GM12878 (cell line): ENCODE measurements at regions of chr18 and their contacts with region 1.

Region 1: GRCh38 chr18:36488131-36488530 is 190.6 kb downstream of the FHOD3 start:
- DNase-seq: no peak
- ATAC-seq: no peak
- H3K4me3 ChIP-seq: no peak overlapping the region
- H3K27ac ChIP-seq: no peak overlapping the region
- H3K4me1 ChIP-seq: no peaks in the 10 kb centered on the region
- H3K27me3 ChIP-seq: no peaks in the 10 kb centered on the region
- CTCF ChIP-seq: no peak
- EP300 ChIP-seq: no peak
- POLR2A ChIP-seq: no peak
- RAD21 ChIP-seq: no peak

Region 2: DNA sequence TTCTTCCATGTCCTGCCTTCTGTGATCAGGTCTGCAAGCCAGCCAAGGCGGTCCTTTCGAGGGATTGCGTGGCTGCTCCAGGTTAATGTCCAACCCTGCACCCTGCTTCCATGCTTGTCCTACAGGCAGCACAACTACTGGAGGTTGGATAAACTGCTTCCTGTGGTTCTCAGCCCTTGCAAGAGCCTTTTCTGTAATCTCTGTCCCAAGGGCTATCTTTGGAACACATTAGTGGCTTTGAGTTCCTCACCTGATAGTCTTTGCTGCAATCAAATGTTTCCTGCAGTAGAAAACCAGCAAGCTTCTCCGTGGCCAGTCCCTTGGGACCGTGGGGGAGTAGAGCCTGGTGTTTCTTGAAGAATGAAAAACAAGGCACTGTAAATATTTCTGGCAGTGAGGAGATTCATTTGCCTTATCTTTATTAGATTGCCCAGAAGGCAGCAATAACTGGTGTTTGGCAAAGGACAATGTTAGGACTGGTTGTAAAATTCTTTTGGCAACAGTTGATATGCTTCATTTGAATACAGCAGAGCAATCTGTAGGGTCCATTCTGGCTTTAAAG is 23.7 kb after region 1 on chr18:
- CTCF ChIA-PET with region 1: interaction called, 3 read pairs
- POLR2A ChIA-PET with region 1: interaction called, 5 read pairs
- RAD21 ChIA-PET with region 1: interaction called, 4 read pairs
- SMC1A ChIA-PET with region 1: interaction called, 20 read pairs
- in situ Hi-C with region 1: no loop called
- intact Hi-C with region 1: no loop called
- DNase-seq: no peak
- ATAC-seq: peak; percentile 37
- H3K4me3 ChIP-seq: no peak overlapping the region
- H3K27ac ChIP-seq: no peak overlapping the region
- H3K4me1 ChIP-seq: no peaks in the 10 kb centered on the region; the same call in 1 of the 2 replicates
- H3K27me3 ChIP-seq: no peaks in the 10 kb centered on the region
- CTCF ChIP-seq: no peak
- EP300 ChIP-seq: no peak
- POLR2A ChIP-seq: no peak
- RAD21 ChIP-seq: no peak